A673 (cell line): ENCODE measurements at regions of chr14 and their contacts with region 1.

Region 1: GRCh38 chr14:71320107-71320733 is 413.0 kb downstream of the PCNX1 start:
- DNase-seq: peak; percentile 100
- H3K4me3 ChIP-seq: peak within 1 kb of the TSS; percentile 72
- H3K27ac ChIP-seq: peak within 1 kb of the TSS; percentile 86
- H3K4me1 ChIP-seq: peaks cover 63% of the 10 kb centered on the region
- H3K27me3 ChIP-seq: no peaks in the 10 kb centered on the region
- CTCF ChIP-seq: no peak

Region 2: DNA sequence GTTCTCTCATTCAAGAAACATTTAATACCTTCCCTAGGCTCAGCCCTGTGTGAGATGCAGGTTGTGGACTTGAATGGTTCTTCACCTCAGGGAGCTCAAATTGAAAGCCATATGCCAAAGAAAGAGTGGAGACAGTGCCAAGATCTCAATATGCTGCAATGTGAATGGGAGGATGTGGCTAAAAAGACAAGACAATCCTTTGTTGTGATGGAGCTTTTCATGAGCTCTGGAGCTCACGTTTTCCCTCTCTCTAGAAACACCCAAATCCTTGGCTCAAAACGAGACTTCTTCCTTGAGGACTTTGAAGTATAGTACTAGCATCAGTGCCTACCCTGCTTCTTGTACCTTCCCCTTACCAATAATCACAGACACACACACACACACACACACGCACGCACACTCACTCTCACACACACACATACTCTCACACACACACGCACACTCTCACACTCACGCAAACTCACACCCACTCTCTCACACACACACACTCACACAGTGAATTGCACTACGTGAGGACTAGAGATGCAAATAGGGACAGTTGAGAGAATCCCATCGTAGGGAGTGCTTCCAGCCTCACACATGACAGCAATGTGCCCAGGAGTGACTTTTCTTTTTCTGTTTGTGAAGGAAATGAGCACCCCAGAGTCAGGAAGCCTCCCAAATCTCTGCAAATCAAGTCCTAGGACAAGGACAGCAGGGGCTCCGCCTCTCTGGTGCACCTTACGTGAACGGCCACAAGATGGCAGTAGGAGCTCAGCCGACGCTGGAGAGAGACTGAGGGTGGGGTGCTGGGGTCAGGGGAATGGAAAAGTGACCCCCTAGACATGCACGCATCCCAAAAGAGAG is 181.5 kb before region 1 on chr14:
- CTCF ChIA-PET with region 1: no interaction called
- POLR2A ChIA-PET with region 1: no interaction called
- intact Hi-C with region 1: loop called (anchors 5 kb)
- DNase-seq: peak; percentile 72
- H3K4me3 ChIP-seq: no peak overlapping the region
- H3K27ac ChIP-seq: no peak overlapping the region
- H3K4me1 ChIP-seq: peaks cover 10% of the 10 kb centered on the region
- H3K27me3 ChIP-seq: no peaks in the 10 kb centered on the region
- CTCF ChIP-seq: peak; percentile 97

Region 3: GRCh38 chr14:71478542-71478941 is 158.3 kb after region 1 on chr14:
- CTCF ChIA-PET with region 1: no interaction called
- POLR2A ChIA-PET with region 1: no interaction called
- intact Hi-C with region 1: loop called (anchors 5 kb)
- DNase-seq: no peak
- H3K4me3 ChIP-seq: no peak overlapping the region
- H3K27ac ChIP-seq: no peak overlapping the region
- H3K4me1 ChIP-seq: peaks cover 44% of the 10 kb centered on the region
- H3K27me3 ChIP-seq: no peaks in the 10 kb centered on the region
- CTCF ChIP-seq: no peak

Region 4: DNA sequence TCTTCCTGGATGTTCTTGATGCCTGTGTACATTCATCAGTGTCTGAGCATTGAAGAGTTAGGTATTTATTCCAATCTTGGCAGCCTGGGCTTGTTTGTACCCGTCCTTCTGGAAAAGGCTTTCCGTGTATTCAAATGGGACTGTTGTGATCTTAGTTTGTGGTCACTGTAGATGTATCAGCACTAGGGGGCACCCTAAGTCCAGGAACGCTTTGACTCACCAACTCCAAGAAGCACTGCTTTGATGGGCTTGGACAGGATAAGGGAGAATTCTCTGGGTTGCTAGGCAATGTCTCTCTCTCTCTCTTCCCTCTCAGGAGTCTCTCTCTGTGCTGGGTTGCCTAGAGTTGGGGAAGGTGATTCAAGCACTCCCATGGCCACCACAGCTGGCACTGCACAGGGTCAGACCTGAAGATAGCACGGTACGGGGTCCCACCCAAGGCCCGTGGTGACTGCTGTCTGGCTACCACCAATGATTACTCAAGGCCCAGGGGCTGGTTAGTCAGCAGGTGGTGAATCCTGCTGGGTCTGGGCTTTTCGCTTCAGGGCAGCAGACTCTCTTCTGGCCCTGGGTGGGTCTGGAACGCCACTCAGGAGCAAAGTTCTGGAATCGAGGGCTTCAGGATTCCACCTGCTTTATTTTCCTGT is 400.9 kb after region 1 on chr14:
- CTCF ChIA-PET with region 1: no interaction called
- POLR2A ChIA-PET with region 1: no interaction called
- intact Hi-C with region 1: loop called (anchors 10 kb)
- DNase-seq: peak; percentile 86
- H3K4me3 ChIP-seq: no peak overlapping the region
- H3K27ac ChIP-seq: no peak overlapping the region
- H3K4me1 ChIP-seq: peaks cover 26% of the 10 kb centered on the region
- H3K27me3 ChIP-seq: no peaks in the 10 kb centered on the region
- CTCF ChIP-seq: peak; percentile 78

Region 5: DNA sequence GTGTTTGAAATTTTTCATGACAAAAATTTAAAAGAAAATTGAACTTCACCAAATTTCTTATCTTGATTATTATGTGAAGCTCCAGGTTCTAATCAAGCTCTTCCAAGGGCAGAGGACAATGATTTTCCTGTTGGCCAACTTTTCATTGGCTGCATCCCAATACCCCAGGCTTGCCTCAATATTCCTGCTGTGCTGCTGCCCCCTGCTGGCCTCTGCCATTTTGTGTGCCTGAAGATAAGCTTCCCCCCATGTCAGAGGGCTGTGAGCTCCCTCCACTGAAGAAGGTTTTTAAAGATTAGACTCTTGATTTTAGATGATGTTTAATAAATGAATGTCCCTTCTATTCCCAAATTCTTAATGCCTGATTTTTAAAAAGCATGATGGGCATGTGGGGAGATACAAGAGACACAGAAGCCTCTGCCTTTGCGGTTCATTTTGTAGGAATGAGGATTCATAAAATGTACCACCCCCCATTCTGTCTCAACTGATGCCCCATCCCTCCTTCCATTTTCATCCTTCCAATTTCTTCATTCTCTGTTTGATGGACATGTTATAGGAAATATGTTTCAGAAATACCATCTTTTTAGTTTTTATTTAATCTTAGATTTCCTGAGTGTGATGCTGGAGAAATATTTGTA is 535.3 kb after region 1 on chr14:
- CTCF ChIA-PET with region 1: interaction called, 3 read pairs
- POLR2A ChIA-PET with region 1: no interaction called
- intact Hi-C with region 1: loop called (anchors 10 kb)
- DNase-seq: peak; percentile 88
- H3K4me3 ChIP-seq: no peak overlapping the region
- H3K27ac ChIP-seq: no peak overlapping the region
- H3K4me1 ChIP-seq: peaks cover 16% of the 10 kb centered on the region
- H3K27me3 ChIP-seq: no peaks in the 10 kb centered on the region
- CTCF ChIP-seq: peak; percentile 94